ENCODE measurements at regions of chr1 and their contacts with region 1.

Region 1: GRCh38 chr1:208170252-208170651 is 73.9 kb downstream of the PLXNA2 start:
- DNase-seq: no peak
- H3K4me3 ChIP-seq: no peak overlapping the region
- H3K27ac ChIP-seq: no peak overlapping the region
- H3K4me1 ChIP-seq: peaks cover 20% of the 10 kb centered on the region
- H3K27me3 ChIP-seq: no peaks in the 10 kb centered on the region
- CTCF ChIP-seq: no peak

Region 2: DNA sequence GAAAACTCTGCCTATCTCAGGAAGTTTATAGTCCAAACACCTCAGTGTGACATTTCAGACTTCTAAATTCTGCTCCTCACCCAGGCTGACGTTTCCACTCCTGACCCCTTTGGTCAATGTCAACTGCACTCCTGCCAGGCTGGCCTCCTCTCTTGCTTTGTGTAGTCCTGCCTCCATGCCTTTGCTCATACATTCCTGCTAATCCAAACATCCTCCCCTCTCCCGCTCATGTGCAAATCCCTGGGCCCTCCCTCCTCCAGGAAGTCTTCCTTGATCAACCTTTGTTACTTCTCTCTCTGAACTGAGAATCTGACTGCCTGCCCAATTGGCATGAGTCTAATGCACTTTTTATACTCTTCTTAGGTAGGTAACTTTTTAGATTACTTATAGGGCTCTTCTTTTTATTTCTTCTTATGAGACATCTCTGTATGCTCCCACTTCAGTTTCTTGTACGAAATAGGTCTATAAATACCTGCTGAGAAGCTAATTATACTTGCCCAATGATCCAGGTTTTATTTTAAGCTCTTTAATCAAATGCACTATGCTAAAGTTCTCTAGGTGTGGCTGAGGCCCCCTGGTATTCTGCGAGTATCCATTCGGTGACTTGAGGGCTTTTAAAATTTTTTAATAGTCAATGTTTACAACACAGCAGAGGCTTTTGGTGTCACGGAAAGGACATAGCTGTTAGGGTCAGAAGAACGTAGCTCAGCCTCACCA is 54.2 kb before region 1 on chr1:
- CTCF ChIA-PET with region 1: no interaction called
- POLR2A ChIA-PET with region 1: no interaction called
- intact Hi-C with region 1: no loop called
- DNase-seq: no peak
- H3K4me3 ChIP-seq: no peak overlapping the region
- H3K27ac ChIP-seq: no peak overlapping the region
- H3K4me1 ChIP-seq: peaks cover 40% of the 10 kb centered on the region
- H3K27me3 ChIP-seq: no peaks in the 10 kb centered on the region
- CTCF ChIP-seq: no peak

Region 3: GRCh38 chr1:208231929-208232661 is 61.8 kb after region 1 on chr1:
- CTCF ChIA-PET with region 1: no interaction called
- POLR2A ChIA-PET with region 1: interaction called, 30 read pairs
- intact Hi-C with region 1: no loop called
- DNase-seq: peak; percentile 88 to 89
- H3K4me3 ChIP-seq: no peak overlapping the region
- H3K27ac ChIP-seq: peak overlapping the region; percentile 27
- H3K4me1 ChIP-seq: peaks cover 64% of the 10 kb centered on the region
- H3K27me3 ChIP-seq: no peaks in the 10 kb centered on the region
- CTCF ChIP-seq: no peak

Measured in PC-9 (cell line).